CD4-positive, alpha-beta memory T cell (primary cell): ENCODE measurements at regions of chr16 and their contacts with region 1.

Region 1: DNA sequence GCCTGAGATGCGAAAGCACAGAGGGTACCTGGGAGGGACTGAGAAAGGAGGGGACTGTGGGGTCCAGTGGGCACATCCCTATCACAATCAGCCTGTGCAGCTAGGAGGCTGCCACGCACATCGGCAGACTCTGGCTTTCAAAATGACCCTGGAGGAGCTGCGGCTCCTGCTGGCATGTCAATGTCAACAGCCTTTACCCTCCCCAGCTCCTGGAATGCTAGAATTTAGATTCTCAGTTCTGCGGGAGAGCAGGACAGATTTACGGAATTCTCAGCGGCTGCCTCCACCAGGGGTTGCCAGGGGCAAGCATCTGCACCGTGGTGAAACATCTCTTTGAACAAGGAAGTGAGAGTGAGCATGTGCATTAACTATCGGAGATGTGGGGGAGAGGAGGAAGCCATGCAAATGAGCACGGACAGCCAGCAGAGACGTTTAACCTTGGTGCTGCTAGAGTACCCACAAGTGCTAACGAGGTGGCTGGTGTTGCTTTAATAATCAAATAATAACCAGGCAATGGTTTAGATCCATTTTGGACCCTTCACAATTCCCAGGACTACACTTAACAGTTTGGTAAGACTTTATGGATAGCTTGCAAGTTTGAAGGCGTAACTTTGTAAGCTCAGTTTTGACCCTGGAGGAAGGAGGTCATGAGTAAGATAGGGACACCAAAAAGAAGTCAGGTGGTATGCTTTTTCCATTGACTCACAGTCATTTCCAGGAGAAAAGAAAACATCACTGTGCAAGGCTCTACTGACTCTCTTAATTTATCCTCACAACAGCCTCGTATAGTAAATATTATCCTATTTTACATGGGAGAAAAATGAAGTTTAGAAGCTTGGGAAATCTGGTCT is 54.1 kb downstream of the XYLT1 start:
- DNase-seq: peak; percentile 61 to 69 (median 65)
- H3K4me3 ChIP-seq: peak overlapping the region; percentile 37 to 58
- H3K4me3 Mint-ChIP-seq: peak overlapping the region; percentile 80 to 93 (median 87)
- H3K27ac ChIP-seq: peak overlapping the region; percentile 46
- H3K27ac Mint-ChIP-seq: peak overlapping the region; percentile 82 to 95 (median 92)
- H3K4me1 ChIP-seq: peaks cover 45% of the 10 kb centered on the region
- H3K4me1 Mint-ChIP-seq: peaks cover 41 to 70% (median 60%) of the 10 kb centered on the region in 4 donors
- H3K27me3 ChIP-seq: no peaks in the 10 kb centered on the region
- H3K27me3 Mint-ChIP-seq: no peaks in the 10 kb centered on the region

Region 2: GRCh38 chr16:17184026-17184425 is 232.7 kb before region 1 on chr16:
- CTCF ChIA-PET with region 1: no interaction called
- POLR2A ChIA-PET with region 1: no interaction called
- intact Hi-C with region 1: no loop called
- DNase-seq: no peak
- H3K4me3 ChIP-seq: no peak overlapping the region
- H3K4me3 Mint-ChIP-seq: no peak overlapping the region
- H3K27ac ChIP-seq: no peak overlapping the region
- H3K27ac Mint-ChIP-seq: no peak overlapping the region
- H3K4me1 ChIP-seq: no peaks in the 10 kb centered on the region
- H3K4me1 Mint-ChIP-seq: peaks cover 0 to 5% (median 2%) of the 10 kb centered on the region in 4 donors
- H3K27me3 ChIP-seq: no peaks in the 10 kb centered on the region
- H3K27me3 Mint-ChIP-seq: no peaks in the 10 kb centered on the region

Region 3: DNA sequence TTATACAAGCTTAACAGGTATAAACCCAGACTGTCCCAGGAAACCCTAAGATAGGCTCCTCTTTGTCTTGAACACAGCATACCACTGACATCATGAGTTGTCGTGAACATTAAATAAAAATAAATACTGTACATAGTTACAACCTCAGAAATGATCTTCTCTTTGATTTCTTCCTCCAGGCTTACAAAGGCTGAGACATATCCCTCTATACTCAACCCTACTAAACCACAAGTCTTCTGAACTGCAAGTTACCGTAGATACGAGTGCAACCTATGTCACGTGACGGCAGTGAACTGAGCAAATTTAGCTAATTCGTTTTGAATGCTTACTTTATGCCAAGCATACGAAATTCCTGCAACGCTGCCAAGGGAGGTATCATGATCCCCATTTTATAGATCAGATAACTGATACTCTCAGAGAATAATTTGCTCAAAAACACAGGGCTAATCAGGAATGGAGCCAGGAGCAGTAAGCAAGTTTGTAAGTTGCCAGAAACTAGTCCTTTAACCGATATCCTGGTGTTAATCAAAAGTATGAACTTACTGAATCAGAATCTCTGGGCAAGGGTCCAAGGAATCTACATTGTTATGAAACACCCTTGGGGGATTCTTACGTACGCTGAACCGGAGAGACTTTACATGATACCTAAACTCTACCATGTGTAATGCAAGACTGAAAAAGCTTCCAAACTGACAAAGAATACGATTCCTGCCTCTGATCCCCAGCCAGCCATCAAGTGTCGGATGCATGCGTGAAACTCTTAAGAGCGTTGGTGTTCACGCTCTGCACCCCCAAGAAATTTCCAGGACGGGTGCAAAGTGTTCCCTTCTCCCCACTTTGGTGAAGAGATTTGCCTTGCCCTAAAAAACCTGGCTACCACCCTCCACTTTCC is 52.1 kb before region 1 on chr16:
- CTCF ChIA-PET with region 1: interaction called, 38 read pairs
- POLR2A ChIA-PET with region 1: interaction called, 61 read pairs
- intact Hi-C with region 1: loop called (anchors 2 kb)
- DNase-seq: peak; percentile 85 to 91 (median 87)
- H3K4me3 ChIP-seq: peak overlapping the region; percentile 10 to 18
- H3K4me3 Mint-ChIP-seq: peak overlapping the region; percentile 52 to 77 (median 68)
- H3K27ac ChIP-seq: peak overlapping the region; percentile 72
- H3K27ac Mint-ChIP-seq: peak overlapping the region; percentile 95 to 100 (median 99)
- H3K4me1 ChIP-seq: peaks cover 100% of the 10 kb centered on the region
- H3K4me1 Mint-ChIP-seq: peaks cover 84 to 100% (median 94%) of the 10 kb centered on the region in 4 donors
- H3K27me3 ChIP-seq: no peaks in the 10 kb centered on the region
- H3K27me3 Mint-ChIP-seq: no peaks in the 10 kb centered on the region

Region 4: DNA sequence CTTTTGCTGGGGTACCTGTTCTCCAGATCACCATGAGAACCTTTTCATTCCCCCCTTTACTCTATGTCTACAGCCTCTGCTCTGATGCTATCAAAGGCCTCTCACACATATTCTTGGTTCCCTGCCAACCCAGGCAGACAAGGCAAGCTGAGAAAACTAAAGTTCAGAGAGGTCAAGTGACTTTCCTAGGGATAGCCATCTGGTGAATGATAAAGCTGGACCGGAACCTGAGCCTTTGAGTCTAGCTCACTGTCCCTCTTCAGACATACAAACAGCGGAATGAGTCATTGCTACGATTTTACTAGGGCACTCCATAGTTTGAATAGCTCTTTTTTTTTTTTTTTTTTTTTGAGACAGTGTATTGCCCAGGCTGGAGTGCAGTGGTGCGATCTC is 19.2 kb before region 1 on chr16:
- CTCF ChIA-PET with region 1: interaction called, 12 read pairs
- POLR2A ChIA-PET with region 1: interaction called, 20 read pairs
- intact Hi-C with region 1: loop called (anchors 2 kb)
- DNase-seq: peak; percentile 37 to 68 (median 45)
- H3K4me3 ChIP-seq: no peak overlapping the region
- H3K4me3 Mint-ChIP-seq: peak overlapping the region; percentile 16 to 89 (median 76)
- H3K27ac ChIP-seq: peak overlapping the region; percentile 77
- H3K27ac Mint-ChIP-seq: peak overlapping the region; percentile 97 to 100 (median 99)
- H3K4me1 ChIP-seq: peaks cover 77% of the 10 kb centered on the region
- H3K4me1 Mint-ChIP-seq: peaks cover 45 to 85% (median 68%) of the 10 kb centered on the region in 4 donors
- H3K27me3 ChIP-seq: no peaks in the 10 kb centered on the region
- H3K27me3 Mint-ChIP-seq: no peaks in the 10 kb centered on the region

Region 5: DNA sequence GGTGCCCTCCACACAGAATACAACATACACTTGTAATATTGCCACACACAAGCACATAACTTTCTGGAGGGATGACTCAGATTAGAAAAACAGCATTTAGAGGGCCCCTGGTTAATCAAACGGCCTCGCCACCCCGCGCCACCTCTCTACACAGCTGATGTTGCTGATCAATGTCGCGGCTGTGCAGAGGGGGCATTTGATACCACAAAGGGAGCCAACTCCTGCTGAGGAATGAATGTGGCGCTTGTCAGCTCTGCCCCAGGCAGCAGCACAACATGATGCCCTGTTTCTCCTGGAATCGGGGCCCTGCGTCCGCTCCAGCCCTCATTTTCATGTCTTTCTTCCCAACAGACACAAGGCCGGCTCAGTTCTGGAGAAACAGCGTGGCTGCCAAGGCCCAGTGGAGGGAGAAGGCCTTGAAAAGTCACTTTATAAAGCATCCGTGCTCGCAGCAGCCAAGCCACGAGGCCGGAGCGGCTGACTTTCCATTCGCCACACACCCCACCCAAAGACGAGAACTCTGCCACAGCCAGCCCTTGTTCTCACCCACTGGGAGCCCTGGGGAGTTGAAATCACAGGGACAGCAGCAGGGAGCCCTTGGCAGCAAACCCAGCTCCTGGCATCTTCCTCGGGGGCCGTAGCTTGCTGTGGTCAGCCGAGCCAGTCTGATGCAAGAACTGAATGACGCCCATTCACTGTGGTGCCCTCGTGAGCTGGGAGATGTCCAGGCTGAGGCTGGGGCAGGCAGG is 11.6 kb before region 1 on chr16:
- CTCF ChIA-PET with region 1: interaction called, 12 read pairs
- POLR2A ChIA-PET with region 1: interaction called, 13 read pairs
- intact Hi-C with region 1: loop called (anchors 2 kb)
- DNase-seq: no peak
- H3K4me3 ChIP-seq: no peak overlapping the region
- H3K4me3 Mint-ChIP-seq: no peak overlapping the region
- H3K27ac ChIP-seq: no peak overlapping the region
- H3K27ac Mint-ChIP-seq: peak overlapping the region in 5 of 7 donors; percentile 22 to 85 (median 64)
- H3K4me1 ChIP-seq: peaks cover 13% of the 10 kb centered on the region
- H3K4me1 Mint-ChIP-seq: peaks cover 15 to 42% (median 23%) of the 10 kb centered on the region in 4 donors
- H3K27me3 ChIP-seq: no peaks in the 10 kb centered on the region
- H3K27me3 Mint-ChIP-seq: no peaks in the 10 kb centered on the region

Region 6: DNA sequence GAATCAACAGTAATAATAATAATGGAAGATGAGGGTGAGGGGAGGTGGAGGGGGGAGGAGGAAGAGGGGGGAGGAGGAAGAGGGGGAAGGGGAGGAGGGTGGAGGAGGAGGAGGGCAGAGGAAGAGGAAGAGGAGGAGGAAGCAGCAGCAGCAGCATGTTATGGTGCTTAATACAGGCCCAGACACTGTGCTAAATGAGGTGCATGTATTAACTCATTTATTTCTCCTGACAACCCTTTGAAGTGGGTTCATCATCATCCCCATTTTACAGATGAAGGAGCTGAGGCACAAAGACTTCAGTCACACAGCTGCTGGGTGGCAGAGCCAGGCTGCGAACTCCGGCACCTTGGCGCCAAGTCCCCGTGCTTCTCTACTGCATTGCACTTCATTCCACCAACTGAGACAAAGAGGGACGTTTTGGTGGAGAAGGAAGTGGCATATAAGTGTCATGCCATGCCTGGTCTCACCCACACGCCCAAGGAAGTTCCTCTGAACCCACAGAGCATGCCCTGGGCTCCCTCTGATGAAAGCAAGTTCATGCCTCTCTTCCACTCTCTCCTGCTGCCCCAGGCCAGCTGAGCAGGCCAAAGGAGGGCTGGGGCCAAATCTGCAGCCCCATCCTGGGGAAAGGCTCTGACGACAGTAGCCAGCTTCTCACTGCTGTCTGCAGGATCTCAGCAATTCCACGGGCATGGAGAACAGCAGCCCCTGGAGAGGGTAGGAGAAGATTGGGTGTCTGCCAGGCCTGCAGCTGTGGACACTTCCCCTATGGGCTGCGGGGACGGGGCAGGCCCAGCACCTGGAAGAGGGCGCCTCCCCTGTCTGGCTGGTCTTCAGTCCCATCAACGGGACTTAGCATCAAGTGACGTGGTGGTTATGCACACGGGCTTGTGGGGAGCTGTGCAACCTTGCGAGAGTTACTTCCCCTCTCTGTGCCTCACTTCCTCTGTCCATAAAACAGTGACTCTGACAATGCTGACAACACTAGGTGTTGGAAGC is 32.3 kb after region 1 on chr16:
- CTCF ChIA-PET with region 1: interaction called, 7 read pairs
- POLR2A ChIA-PET with region 1: interaction called, 6 read pairs
- intact Hi-C with region 1: loop called (anchors 5 kb)
- DNase-seq: peak; percentile 48 to 70 (median 56)
- H3K4me3 ChIP-seq: peak overlapping the region in 1 of 2 donors; percentile 15
- H3K4me3 Mint-ChIP-seq: peak overlapping the region; percentile 24 to 78 (median 74)
- H3K27ac ChIP-seq: peak overlapping the region; percentile 44
- H3K27ac Mint-ChIP-seq: peak overlapping the region; percentile 89 to 96 (median 93)
- H3K4me1 ChIP-seq: peaks cover 69% of the 10 kb centered on the region
- H3K4me1 Mint-ChIP-seq: peaks cover 43 to 78% (median 56%) of the 10 kb centered on the region in 4 donors
- H3K27me3 ChIP-seq: no peaks in the 10 kb centered on the region
- H3K27me3 Mint-ChIP-seq: no peaks in the 10 kb centered on the region

Region 7: DNA sequence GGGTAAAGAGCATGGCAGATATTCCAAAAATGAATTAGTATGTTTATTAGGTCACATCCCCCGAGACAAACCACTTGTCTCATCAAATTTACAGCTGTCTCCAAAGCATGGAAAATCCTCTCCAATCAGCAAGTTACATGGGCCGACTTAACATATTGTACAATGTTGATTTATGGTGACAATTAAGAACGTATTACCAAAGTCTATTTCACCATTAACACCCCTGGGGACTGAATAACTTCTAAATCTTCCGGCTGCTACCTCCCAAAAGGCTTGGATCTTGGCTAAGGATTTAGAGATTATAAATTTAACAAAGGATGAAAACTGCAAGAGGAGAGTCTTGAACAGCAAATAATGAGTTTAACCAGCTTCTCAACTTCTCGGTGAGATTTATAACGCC is 607.9 kb after region 1 on chr16:
- CTCF ChIA-PET with region 1: no interaction called
- POLR2A ChIA-PET with region 1: no interaction called
- intact Hi-C with region 1: no loop called
- DNase-seq: no peak
- H3K4me3 ChIP-seq: no peak overlapping the region
- H3K4me3 Mint-ChIP-seq: no peak overlapping the region
- H3K27ac ChIP-seq: no peak overlapping the region
- H3K27ac Mint-ChIP-seq: no peak overlapping the region
- H3K4me1 ChIP-seq: no peaks in the 10 kb centered on the region
- H3K4me1 Mint-ChIP-seq: no peaks in the 10 kb centered on the region
- H3K27me3 ChIP-seq: no peaks in the 10 kb centered on the region
- H3K27me3 Mint-ChIP-seq: peaks cover 13 to 17% of the 10 kb centered on the region in 2 donors